Endothelial cell of umbilical vein (primary cell): ENCODE measurements at regions of chr7 and their contacts with region 1.

Region 1: GRCh38 chr7:107879400-107880035 is 11.5 kb upstream of the DLD start:
- DNase-seq: peak; percentile 86
- H3K4me3 ChIP-seq: no peak overlapping the region
- H3K27ac ChIP-seq: no peak overlapping the region
- H3K4me1 ChIP-seq: peaks cover 2% of the 10 kb centered on the region
- H3K27me3 ChIP-seq: peaks cover 13 to 15% of the 10 kb centered on the region in 2 experiments
- CTCF ChIP-seq: peak; percentile 64 to 65
- POLR2A ChIP-seq: no peak

Region 2: DNA sequence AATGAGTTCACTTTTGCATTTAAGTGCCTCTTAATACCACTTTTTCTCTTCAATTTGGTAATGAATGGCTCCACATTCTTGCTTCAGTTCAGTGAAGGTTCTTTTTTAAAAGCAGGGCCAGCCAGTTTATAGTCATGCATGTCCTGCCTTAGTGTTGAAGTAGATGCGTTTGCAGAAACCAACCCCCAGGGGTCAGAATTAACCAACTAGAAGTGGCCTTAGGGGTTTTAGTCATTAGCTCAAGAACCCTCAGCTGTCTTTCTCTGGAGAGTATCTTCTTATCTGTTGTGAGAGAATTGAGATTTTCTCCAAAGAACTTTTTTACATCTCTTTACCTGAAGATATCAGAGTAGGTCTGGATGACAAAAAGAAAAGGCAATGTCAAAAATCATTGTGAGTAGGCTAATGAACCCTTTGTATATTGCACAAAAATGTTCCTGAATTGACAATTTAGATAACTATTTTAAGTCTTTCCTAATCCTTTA is 932.2 kb before region 1 on chr7:
- CTCF ChIA-PET with region 1: interaction called, 26 read pairs
- POLR2A ChIA-PET with region 1: no interaction called
- dilution Hi-C with region 1: no loop called
- intact Hi-C with region 1: loop called (anchors 1 kb)
- DNase-seq: peak; percentile 83
- H3K4me3 ChIP-seq: no peak overlapping the region
- H3K27ac ChIP-seq: no peak overlapping the region
- H3K4me1 ChIP-seq: no peaks in the 10 kb centered on the region
- H3K27me3 ChIP-seq: peaks cover 5 to 8% of the 10 kb centered on the region in 2 experiments
- CTCF ChIP-seq: peak; percentile 64 to 69
- POLR2A ChIP-seq: no peak

Region 3: GRCh38 chr7:107201795-107202450 is 677.6 kb before region 1 on chr7:
- CTCF ChIA-PET with region 1: interaction called, 31 read pairs
- POLR2A ChIA-PET with region 1: no interaction called
- dilution Hi-C with region 1: no loop called
- intact Hi-C with region 1: loop called (anchors 2 kb)
- DNase-seq: peak; percentile 42
- H3K4me3 ChIP-seq: no peak overlapping the region
- H3K27ac ChIP-seq: no peak overlapping the region
- H3K4me1 ChIP-seq: no peaks in the 10 kb centered on the region
- H3K27me3 ChIP-seq: no peaks in the 10 kb centered on the region
- CTCF ChIP-seq: peak; percentile 42 to 45
- POLR2A ChIP-seq: no peak

Region 4: DNA sequence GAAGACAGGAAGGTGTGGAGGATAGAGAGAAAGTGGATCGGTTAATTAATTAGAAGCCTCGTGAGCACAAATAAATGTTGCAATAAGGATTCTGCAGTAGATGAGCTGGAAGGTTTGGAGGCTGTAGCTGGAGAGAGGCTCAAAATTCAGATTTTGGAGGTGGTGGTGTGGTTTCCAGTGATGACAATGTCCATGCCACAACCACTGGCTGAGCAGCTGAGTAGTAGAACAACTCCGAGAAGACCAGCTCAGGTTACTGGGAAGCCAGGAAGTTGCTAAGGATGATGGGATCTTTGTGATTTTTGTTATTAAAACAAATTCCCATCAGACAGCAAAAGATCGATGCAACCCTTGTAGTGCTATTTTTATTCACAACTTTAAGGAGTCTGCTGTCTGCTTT is 211.2 kb before region 1 on chr7:
- CTCF ChIA-PET with region 1: no interaction called
- POLR2A ChIA-PET with region 1: no interaction called
- dilution Hi-C with region 1: no loop called
- intact Hi-C with region 1: no loop called
- DNase-seq: no peak
- H3K4me3 ChIP-seq: no peak overlapping the region
- H3K27ac ChIP-seq: no peak overlapping the region
- H3K4me1 ChIP-seq: no peaks in the 10 kb centered on the region
- H3K27me3 ChIP-seq: peaks cover 7 to 18% of the 10 kb centered on the region in 2 experiments
- CTCF ChIP-seq: no peak
- POLR2A ChIP-seq: no peak

Region 5: DNA sequence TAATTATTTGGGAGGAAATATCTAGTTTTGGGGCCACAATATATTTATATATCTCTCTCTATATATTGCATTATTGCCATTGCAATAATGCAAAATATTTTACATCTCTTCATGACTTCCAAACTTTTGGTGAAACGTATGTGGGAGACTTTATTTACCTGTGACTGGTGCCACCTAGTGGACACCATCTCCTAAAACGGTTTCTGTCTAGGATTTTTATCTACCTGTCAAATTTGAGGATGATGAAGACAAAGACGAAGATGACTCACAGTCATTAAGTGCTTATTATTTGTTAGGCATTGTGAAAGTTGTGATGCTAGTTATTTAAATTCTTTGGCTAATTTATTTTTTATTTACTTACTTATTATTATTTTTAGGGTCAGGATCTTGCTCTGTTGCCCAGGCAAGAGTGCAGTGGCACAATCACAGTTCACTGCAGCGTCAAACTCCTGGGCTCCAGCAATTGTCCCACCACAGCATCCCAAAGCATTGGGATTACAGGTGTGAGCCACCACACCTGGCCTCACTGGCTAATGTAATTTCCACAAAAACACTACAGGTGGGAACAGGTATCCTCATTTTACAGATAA is 154.3 kb before region 1 on chr7:
- CTCF ChIA-PET with region 1: interaction called, 16 read pairs
- POLR2A ChIA-PET with region 1: no interaction called
- dilution Hi-C with region 1: no loop called
- intact Hi-C with region 1: no loop called
- DNase-seq: peak; percentile 77
- H3K4me3 ChIP-seq: no peak overlapping the region
- H3K27ac ChIP-seq: no peak overlapping the region
- H3K4me1 ChIP-seq: no peaks in the 10 kb centered on the region
- H3K27me3 ChIP-seq: peaks cover 12 to 17% of the 10 kb centered on the region in 2 experiments
- CTCF ChIP-seq: peak; percentile 41 to 47
- POLR2A ChIP-seq: no peak

Region 6: GRCh38 chr7:107768272-107768671 is 111.2 kb before region 1 on chr7:
- CTCF ChIA-PET with region 1: interaction called, 17 read pairs
- POLR2A ChIA-PET with region 1: no interaction called
- dilution Hi-C with region 1: no loop called
- intact Hi-C with region 1: no loop called
- DNase-seq: no peak
- H3K4me3 ChIP-seq: no peak overlapping the region
- H3K27ac ChIP-seq: no peak overlapping the region
- H3K4me1 ChIP-seq: no peaks in the 10 kb centered on the region
- H3K27me3 ChIP-seq: peaks cover 2 to 23% of the 10 kb centered on the region in 2 experiments
- CTCF ChIP-seq: no peak
- POLR2A ChIP-seq: no peak

Region 7: DNA sequence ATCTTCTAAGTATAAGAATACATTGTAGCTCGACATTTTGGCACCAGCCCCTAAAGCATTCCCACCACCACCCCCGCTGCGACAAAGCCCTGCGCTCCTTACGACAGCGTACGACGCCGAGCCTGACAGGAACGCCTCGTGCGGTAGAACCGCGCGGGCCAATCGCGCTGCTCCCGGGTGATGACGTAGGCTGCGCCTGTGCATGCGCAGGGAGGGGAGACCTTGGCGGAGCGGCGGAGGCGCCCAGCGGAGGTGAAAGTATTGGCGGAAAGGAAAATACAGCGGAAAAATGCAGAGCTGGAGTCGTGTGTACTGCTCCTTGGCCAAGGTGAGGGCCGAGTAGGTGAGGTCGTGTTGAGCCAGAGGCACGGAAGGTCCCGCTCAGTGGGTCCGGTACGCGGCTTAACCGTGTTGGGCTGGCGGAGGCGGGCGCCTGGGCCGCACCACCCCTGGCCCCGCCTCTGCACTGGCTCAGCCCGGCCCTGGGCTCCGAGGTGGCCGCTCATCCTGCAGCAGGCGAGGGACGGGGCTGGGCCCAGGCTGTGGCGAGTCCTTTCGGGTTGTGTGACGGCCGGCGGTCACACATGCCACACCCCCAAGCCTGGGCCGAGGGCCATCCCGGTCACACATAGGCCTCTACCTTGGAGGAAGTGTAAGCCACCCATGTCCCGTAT is 11.6 kb after region 1 on chr7 and contains the start of gene DLD:
- CTCF ChIA-PET with region 1: interaction called, 23 read pairs
- POLR2A ChIA-PET with region 1: no interaction called
- dilution Hi-C with region 1: no loop called
- intact Hi-C with region 1: no loop called
- DNase-seq: peak; percentile 93
- H3K4me3 ChIP-seq: peak within 1 kb of the TSS; percentile 59 to 85 (median 62)
- H3K27ac ChIP-seq: peak within 1 kb of the TSS; percentile 65
- H3K4me1 ChIP-seq: peaks cover 24% of the 10 kb centered on the region
- H3K27me3 ChIP-seq: peaks cover 2 to 8% of the 10 kb centered on the region in 2 experiments
- CTCF ChIP-seq: no peak
- POLR2A ChIP-seq: peak; percentile 77
- total RNA-seq, gene DLD: 61.7 and 77.4 TPM in 2 replicates

Region 8: DNA sequence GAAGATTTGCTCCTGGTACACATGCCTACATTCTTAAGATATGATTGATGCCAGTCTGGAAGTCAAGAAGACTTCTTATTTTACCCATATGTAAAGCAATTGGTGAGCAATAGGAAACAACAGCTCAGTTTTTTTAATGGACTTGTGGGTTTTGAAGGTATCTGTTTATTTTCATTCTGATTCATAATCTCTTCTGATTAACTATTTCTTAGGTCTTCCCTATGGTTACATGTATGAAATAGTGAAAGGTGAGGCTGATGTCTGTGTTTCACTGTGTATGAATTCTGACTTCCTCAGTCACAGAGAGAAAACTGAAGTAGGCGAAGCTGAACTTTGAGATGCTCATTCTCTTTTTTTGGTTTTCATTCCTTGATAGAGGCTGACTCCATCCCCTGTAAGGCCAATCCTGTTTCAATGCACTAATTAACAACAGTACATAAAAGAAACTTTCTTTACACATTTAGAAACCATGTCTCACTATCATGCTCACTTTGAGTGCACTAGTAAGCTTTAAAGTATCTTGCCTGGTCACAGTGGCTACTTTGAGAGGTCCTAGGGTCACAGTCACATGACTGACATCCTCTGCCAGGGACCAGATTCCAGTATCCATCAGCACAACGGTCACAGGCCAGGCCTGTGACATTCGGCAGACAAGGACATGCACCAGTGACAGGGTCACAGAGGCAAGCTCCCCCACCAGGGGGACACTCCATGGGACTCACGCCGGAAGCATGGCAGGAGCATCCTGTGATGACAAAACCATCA is 182.9 kb after region 1 on chr7:
- CTCF ChIA-PET with region 1: no interaction called
- POLR2A ChIA-PET with region 1: no interaction called
- dilution Hi-C with region 1: no loop called
- intact Hi-C with region 1: no loop called
- DNase-seq: no peak
- H3K4me3 ChIP-seq: no peak overlapping the region
- H3K27ac ChIP-seq: no peak overlapping the region
- H3K4me1 ChIP-seq: peaks cover 14% of the 10 kb centered on the region
- H3K27me3 ChIP-seq: no peaks in the 10 kb centered on the region
- CTCF ChIP-seq: no peak
- POLR2A ChIP-seq: no peak

Region 9: GRCh38 chr7:108222236-108222892 is 342.8 kb after region 1 on chr7:
- CTCF ChIA-PET with region 1: no interaction called
- POLR2A ChIA-PET with region 1: no interaction called
- dilution Hi-C with region 1: no loop called
- intact Hi-C with region 1: no loop called
- DNase-seq: peak; percentile 83
- H3K4me3 ChIP-seq: no peak overlapping the region
- H3K27ac ChIP-seq: peak overlapping the region; percentile 57
- H3K4me1 ChIP-seq: peaks cover 13% of the 10 kb centered on the region
- H3K27me3 ChIP-seq: no peaks in the 10 kb centered on the region
- CTCF ChIP-seq: no peak
- POLR2A ChIP-seq: no peak